AG04450 (cell line): ENCODE measurements at regions of chr7 and their contacts with region 1.

Region 1: DNA sequence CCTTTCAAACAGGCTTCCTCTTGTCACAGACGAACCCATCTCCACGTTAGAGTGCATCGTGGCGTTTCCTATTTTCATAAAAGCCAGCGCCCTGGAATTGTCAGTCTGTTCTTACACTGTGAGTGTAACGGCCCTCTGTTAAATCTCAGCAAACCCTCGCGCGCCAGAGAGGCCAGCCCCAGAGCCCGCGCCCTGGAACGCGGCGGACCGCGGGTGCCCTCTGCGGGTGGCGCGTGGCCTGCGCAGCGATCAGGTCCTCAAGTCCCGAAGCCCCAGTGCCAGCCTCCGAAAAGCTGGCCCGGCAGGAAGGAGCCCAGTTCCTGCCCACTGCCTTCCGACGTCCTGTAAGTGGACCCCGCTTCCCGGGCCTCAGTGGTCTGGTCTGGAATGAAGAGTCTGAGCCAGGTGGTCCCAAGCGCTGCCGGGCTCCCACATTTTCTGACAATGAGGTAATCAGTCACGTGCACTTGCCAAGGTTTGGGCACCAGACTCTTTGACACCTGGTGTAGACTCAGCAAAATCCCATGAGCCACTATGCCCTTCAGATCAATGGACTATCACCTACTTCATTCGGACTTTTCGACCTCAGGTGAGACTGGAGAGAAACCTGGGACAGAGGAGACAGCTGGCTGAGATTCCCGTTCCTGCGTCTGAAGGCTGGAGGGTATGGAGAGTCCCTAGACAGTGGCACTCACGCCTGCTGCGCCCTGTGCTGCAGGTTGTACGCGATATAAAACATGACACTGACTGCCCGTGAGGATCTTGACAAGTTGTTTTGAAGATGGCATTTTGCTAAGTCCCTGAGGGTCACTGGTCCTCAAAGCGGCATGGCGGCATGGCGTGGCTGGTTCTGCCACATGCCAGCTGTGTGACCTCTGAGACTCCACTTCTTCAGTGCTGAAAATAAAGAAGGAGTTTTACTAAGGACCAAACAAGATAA is 109.4 kb upstream of the LANCL2 start:
- DNase-seq: peak; percentile 32
- H3K4me3 ChIP-seq: peak overlapping the region; percentile 70
- H3K27ac ChIP-seq: peak overlapping the region; percentile 47
- H3K27me3 ChIP-seq: peaks cover 3% of the 10 kb centered on the region
- CTCF ChIP-seq: peak; percentile 80

Region 2: GRCh38 chr7:53877688-53878087 is 1378.1 kb before region 1 on chr7:
- CTCF ChIA-PET with region 1: no interaction called
- POLR2A ChIA-PET with region 1: no interaction called
- DNase-seq: no peak
- H3K4me3 ChIP-seq: no peak overlapping the region
- H3K27ac ChIP-seq: no peak overlapping the region
- H3K27me3 ChIP-seq: no peaks in the 10 kb centered on the region
- CTCF ChIP-seq: no peak

Region 3: GRCh38 chr7:54758702-54759592 is 496.8 kb before region 1 on chr7 and contains the start of gene SEC61G:
- CTCF ChIA-PET with region 1: interaction called, 26 read pairs
- POLR2A ChIA-PET with region 1: interaction called, 7 read pairs
- DNase-seq: peak; percentile 94
- H3K4me3 ChIP-seq: peak within 1 kb of the TSS; percentile 93
- H3K27ac ChIP-seq: peak within 1 kb of the TSS; percentile 89
- H3K27me3 ChIP-seq: no peaks in the 10 kb centered on the region
- CTCF ChIP-seq: no peak
- polyA plus RNA-seq, gene SEC61G: 250 and 344 TPM in 2 replicates

Region 4: GRCh38 chr7:54904130-54904529 is 351.6 kb before region 1 on chr7:
- CTCF ChIA-PET with region 1: interaction called, 10 read pairs
- POLR2A ChIA-PET with region 1: no interaction called
- DNase-seq: peak; percentile 74
- H3K4me3 ChIP-seq: no peak overlapping the region
- H3K27ac ChIP-seq: no peak overlapping the region
- H3K27me3 ChIP-seq: no peaks in the 10 kb centered on the region
- CTCF ChIP-seq: no peak

Region 5: DNA sequence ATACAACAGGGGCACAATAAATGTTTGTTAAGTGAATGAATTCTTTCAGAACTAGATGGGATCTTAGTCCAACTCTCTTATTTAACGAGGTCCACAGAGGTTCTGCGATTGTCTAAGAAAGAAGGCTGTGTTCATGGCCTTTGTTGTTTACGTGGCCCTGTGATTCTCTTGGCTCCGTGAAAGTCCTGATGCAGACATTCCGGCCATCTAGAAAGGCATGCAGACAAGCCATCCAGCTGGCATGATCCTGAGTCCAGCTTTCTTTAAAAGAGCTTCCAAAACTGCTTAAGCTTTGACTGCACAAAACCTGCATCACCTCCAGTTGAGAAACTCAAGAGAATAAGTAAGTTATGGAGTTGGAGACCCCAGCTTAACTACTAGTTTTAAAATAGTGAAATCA is 211.0 kb before region 1 on chr7:
- CTCF ChIA-PET with region 1: interaction called, 13 read pairs
- POLR2A ChIA-PET with region 1: interaction called, 3 read pairs
- DNase-seq: no peak
- H3K4me3 ChIP-seq: no peak overlapping the region
- H3K27ac ChIP-seq: peak overlapping the region; percentile 22
- H3K27me3 ChIP-seq: no peaks in the 10 kb centered on the region
- CTCF ChIP-seq: no peak

Region 6: DNA sequence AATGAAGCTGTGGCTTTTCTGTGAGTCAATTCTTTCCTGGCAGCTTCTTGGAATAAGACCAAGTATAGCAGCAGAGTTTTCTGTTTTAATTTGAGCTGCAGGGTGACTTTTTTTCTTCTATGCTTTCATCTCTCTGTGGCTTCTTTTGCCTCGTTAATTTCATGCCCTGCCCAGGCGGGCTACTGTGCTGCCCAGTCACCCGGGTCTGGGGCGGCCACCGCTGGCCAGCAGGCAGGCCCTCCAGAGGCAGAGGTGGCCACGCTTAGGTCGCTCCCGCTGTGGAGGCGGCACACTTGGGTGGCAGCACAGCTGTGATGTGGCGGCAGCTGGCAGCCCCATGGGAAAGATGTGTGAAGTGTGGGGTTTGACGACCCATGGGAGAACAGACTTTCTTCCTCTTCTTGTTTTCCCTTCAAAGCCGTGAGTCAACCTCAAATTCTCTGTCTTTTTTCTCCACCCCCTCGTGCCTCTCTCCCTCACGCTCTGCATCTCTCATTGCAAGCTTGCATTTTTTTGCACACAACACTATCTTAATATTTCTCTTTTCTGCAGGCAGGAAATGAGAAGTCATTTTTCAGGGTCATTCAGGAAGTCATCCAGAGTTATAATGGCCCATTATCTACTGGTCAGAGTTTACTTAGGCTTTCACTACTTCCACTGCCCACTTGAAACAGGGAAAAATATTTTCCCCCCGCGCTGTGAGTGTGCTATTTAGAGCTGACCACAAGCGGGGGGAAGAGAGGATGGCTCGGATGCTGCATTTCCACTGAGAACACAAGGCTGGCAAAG is 169.2 kb before region 1 on chr7:
- CTCF ChIA-PET with region 1: interaction called, 16 read pairs
- POLR2A ChIA-PET with region 1: interaction called, 3 read pairs
- DNase-seq: peak; percentile 45
- H3K4me3 ChIP-seq: peak overlapping the region; percentile 52
- H3K27ac ChIP-seq: peak overlapping the region; percentile 97
- H3K27me3 ChIP-seq: no peaks in the 10 kb centered on the region
- CTCF ChIP-seq: no peak

Region 7: DNA sequence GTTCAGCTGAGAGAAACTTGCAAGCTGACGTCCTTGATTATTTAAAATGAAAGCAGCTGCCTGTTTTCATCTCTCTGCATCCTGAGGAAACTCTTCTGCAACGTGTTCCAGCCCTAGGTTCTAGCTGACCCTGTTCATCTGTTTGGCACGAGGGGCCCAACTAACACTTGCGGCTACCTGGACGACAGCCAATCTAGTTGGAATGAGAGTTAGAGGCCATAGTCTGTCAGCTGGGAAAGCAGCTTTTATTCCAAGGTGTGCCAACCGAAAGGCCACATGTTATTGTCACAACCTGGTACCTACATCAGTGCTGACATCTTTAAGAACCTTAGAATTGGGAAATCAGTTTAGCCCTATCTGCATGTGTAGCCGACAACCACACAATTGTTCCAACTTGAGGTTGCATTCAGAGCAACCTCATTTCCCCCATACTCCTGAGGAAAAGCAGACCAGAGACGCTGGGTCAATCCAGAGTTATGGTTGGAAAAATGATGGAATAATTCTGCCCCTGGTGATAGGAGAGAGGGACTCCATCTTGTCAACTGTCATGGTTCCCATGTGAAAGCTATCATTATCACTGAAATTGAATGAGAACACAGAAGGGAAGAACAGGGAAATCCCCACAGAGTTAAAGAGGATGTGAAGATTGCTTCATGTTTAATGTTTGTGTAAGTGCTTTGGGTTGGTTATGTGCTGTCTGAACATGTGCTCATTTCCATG is 115.4 kb before region 1 on chr7:
- CTCF ChIA-PET with region 1: interaction called, 11 read pairs
- POLR2A ChIA-PET with region 1: no interaction called
- DNase-seq: peak; percentile 37
- H3K4me3 ChIP-seq: no peak overlapping the region
- H3K27ac ChIP-seq: peak overlapping the region; percentile 12
- H3K27me3 ChIP-seq: no peaks in the 10 kb centered on the region
- CTCF ChIP-seq: no peak

Region 8: GRCh38 chr7:55212838-55213539 is 42.8 kb before region 1 on chr7:
- CTCF ChIA-PET with region 1: interaction called, 15 read pairs
- POLR2A ChIA-PET with region 1: interaction called, 4 read pairs
- DNase-seq: no peak
- H3K4me3 ChIP-seq: no peak overlapping the region
- H3K27ac ChIP-seq: no peak overlapping the region
- H3K27me3 ChIP-seq: no peaks in the 10 kb centered on the region
- CTCF ChIP-seq: no peak

Region 9: GRCh38 chr7:55348499-55348898 is 92.7 kb after region 1 on chr7:
- CTCF ChIA-PET with region 1: no interaction called
- POLR2A ChIA-PET with region 1: no interaction called
- DNase-seq: no peak
- H3K4me3 ChIP-seq: no peak overlapping the region
- H3K27ac ChIP-seq: no peak overlapping the region
- H3K27me3 ChIP-seq: peaks cover 17% of the 10 kb centered on the region
- CTCF ChIP-seq: no peak